ENCODE measurements at regions of chr12 and their contacts with region 1.

Region 1: GRCh38 chr12:4857472-4858291 is 52.0 kb upstream of the KCNA1 start:
- DNase-seq: peak; percentile 34
- ATAC-seq: peak; percentile 90
- H3K4me3 ChIP-seq: no peak overlapping the region
- H3K27ac ChIP-seq: no peak overlapping the region
- H3K4me1 ChIP-seq: peaks cover 34% of the 10 kb centered on the region
- H3K27me3 ChIP-seq: no peaks in the 10 kb centered on the region; a peak in 1 of 4 replicates
- CTCF ChIP-seq: peak; percentile 96; a peak in 5 of 6 replicates
- EP300 ChIP-seq: no peak
- POLR2A ChIP-seq: no peak
- RAD21 ChIP-seq: peak; percentile 93

Region 2: DNA sequence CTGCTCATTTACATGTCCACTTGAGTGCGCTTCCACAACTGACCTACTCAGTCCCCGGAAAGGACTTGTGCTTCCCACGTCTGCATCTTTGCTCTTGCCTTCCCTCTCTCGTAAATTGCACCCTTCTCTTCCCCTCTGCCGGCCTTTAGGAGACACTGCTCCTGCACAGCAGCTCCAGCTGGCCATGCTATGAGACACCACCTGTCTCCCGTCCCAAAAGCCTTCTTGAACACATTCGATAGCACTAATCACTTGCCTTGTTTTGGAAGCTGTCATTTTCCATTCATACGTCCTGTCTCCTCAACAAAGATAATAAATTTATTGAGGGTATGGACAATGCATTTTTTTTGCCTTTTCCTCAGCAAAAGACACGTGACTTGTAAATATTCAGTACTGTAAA is 36.3 kb after region 1 on chr12:
- CTCF ChIA-PET with region 1: interaction called, 10 read pairs
- POLR2A ChIA-PET with region 1: interaction called, 3 read pairs
- RAD21 ChIA-PET with region 1: interaction called, 3 read pairs
- SMC1A ChIA-PET with region 1: interaction called, 7 read pairs
- in situ Hi-C with region 1: no loop called
- intact Hi-C with region 1: loop called (anchors 5 kb)
- DNase-seq: no peak
- ATAC-seq: no peak
- H3K4me3 ChIP-seq: no peak overlapping the region
- H3K27ac ChIP-seq: no peak overlapping the region
- H3K4me1 ChIP-seq: no peaks in the 10 kb centered on the region
- H3K27me3 ChIP-seq: no peaks in the 10 kb centered on the region; a peak in 1 of 4 replicates
- CTCF ChIP-seq: no peak
- EP300 ChIP-seq: no peak
- POLR2A ChIP-seq: no peak
- RAD21 ChIP-seq: no peak

Region 3: DNA sequence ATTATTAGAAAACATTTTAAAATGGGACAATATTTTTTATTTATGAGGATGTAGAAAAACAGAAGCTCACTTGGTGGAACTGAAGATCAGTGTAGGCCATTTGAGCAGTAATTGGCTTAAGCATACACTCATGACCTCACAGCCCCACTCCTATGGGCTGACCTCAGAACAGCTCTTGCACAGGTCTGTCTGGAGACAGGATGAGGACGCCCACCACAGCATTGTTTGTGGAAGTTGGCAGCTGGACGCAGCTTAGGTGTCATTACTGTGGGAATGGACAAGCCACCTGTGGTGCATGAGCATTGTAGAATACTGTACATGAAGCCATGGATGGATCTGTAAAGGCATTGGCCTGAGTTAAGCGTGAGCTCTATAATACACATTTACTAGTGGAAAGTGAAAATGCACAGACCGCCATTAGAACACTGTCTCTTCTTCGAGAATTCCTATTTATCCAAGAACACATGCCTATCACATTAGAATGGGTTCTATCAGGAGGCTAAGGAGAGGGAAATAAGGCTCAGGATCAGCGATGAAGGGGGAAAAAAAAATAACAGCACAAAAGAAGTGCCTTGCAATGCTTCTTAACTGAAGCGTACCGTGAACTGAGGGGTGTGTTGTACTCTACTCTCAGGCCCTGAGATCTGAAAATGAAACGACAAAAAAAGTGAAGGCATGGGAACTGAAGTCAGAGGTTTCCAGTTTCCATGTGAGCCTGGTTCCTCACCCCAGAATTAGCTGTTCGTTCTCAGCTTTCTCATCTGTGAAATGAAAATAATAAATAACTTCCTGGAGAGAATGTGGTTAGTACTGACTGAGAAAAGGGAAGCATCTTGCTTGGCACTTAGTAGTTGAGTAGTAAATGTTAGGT is 85.6 kb after region 1 on chr12:
- CTCF ChIA-PET with region 1: interaction called, 9 read pairs
- POLR2A ChIA-PET with region 1: interaction called, 3 read pairs
- RAD21 ChIA-PET with region 1: interaction called, 9 read pairs
- SMC1A ChIA-PET with region 1: interaction called, 13 read pairs
- in situ Hi-C with region 1: no loop called
- intact Hi-C with region 1: no loop called
- DNase-seq: peak; percentile 94
- ATAC-seq: peak; percentile 95
- H3K4me3 ChIP-seq: peak overlapping the region; percentile 48; the same call in 1 of the 2 replicates
- H3K27ac ChIP-seq: peak overlapping the region; percentile 94
- H3K4me1 ChIP-seq: peaks cover 32% of the 10 kb centered on the region
- H3K27me3 ChIP-seq: no peaks in the 10 kb centered on the region
- CTCF ChIP-seq: no peak
- EP300 ChIP-seq: no peak
- POLR2A ChIP-seq: no peak
- RAD21 ChIP-seq: 0 out of 2 replicates have a peak, but pooled peaks have one; percentile 5

Region 4: DNA sequence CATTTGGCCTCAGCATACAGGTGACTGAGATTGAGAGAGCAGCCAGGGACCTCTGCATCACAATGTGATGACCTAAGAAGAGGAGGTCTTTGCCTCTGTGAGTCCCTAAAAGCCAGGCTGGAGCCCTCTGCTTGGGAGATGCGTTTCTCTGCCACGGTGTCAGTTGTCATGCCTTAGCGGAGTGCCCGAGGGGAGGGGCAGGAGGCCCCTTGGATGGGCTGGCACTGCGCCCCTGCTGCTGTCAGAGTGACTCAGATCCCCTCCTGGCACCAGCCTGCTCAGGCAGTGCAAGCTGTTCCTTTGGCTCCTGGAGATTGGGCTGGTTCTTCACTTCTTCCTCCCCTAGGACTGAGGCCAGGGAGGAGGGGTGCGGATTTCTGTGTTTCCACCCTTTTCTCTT is 121.1 kb after region 1 on chr12:
- CTCF ChIA-PET with region 1: interaction called, 70 read pairs
- POLR2A ChIA-PET with region 1: no interaction called
- RAD21 ChIA-PET with region 1: interaction called, 4 read pairs
- SMC1A ChIA-PET with region 1: interaction called, 3 read pairs
- in situ Hi-C with region 1: no loop called
- intact Hi-C with region 1: no loop called
- DNase-seq: no peak
- ATAC-seq: no peak
- H3K4me3 ChIP-seq: no peak overlapping the region
- H3K27ac ChIP-seq: no peak overlapping the region
- H3K4me1 ChIP-seq: peaks cover 7% of the 10 kb centered on the region; the same call in 1 of the 2 replicates
- H3K27me3 ChIP-seq: no peaks in the 10 kb centered on the region; a peak in 2 of 4 replicates
- CTCF ChIP-seq: no peak
- EP300 ChIP-seq: no peak
- POLR2A ChIP-seq: no peak
- RAD21 ChIP-seq: no peak

Region 5: GRCh38 chr12:5003020-5003666 is 145.5 kb after region 1 on chr12:
- CTCF ChIA-PET with region 1: interaction called, 84 read pairs
- POLR2A ChIA-PET with region 1: interaction called, 3 read pairs
- RAD21 ChIA-PET with region 1: interaction called, 40 read pairs
- SMC1A ChIA-PET with region 1: interaction called, 26 read pairs
- in situ Hi-C with region 1: loop called (anchors 5 kb)
- intact Hi-C with region 1: loop called (anchors 1 kb)
- DNase-seq: no peak
- ATAC-seq: peak; percentile 99
- H3K4me3 ChIP-seq: no peak overlapping the region
- H3K27ac ChIP-seq: no peak overlapping the region
- H3K4me1 ChIP-seq: peaks cover 7% of the 10 kb centered on the region; the same call in 1 of the 2 replicates
- H3K27me3 ChIP-seq: no peaks in the 10 kb centered on the region
- CTCF ChIP-seq: peak; percentile 99 to 100 (median 100); a peak in 5 of 6 replicates
- EP300 ChIP-seq: no peak
- POLR2A ChIP-seq: no peak
- RAD21 ChIP-seq: peak; percentile 100

Region 6: DNA sequence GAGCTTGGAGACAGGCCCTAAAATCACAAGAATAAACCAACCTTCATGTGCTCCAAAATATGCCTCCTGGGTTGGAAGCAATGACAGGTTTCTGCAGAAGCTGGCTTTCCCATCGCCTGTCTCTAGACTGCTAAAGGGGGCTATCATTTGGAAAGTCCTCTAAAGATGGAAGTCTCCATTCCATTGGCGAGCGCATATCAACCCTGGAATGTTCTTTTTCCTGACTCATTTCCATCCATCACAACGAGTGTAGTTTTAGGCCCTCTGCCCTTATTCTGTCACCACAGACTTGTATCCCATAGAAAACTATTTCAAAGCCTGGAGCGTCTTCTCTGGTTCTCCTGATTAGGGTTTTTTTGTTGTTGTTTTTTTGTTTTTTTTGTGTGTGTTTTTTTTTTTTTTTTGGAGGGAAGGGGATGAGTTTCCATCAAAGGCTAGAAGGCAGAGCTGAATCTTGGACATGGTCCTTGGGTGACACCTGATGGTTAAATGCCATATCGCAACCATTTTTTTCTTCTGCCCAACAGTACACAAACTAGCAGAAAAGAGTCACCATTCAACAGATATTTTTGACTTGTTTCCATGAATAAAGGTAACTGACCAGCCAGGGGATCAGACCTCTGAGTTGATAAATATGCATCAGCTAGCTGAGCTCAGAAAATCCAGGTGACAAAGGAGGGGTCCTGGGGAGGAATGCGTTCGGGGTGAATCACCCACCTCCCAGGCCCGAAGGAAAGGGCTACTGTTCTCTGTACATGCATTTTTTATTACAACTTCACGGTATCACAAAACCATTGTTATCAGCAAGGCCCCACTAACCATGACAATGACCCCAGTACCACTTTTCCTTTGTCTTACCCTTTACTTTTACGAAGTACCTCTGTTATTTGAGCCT is 226.5 kb after region 1 on chr12:
- CTCF ChIA-PET with region 1: interaction called, 39 read pairs
- POLR2A ChIA-PET with region 1: no interaction called
- RAD21 ChIA-PET with region 1: interaction called, 4 read pairs
- SMC1A ChIA-PET with region 1: interaction called, 13 read pairs
- in situ Hi-C with region 1: loop called (anchors 5 kb)
- intact Hi-C with region 1: loop called (anchors 1 kb)
- DNase-seq: peak; percentile 23
- ATAC-seq: peak; percentile 68
- H3K4me3 ChIP-seq: no peak overlapping the region
- H3K27ac ChIP-seq: no peak overlapping the region
- H3K4me1 ChIP-seq: no peaks in the 10 kb centered on the region
- H3K27me3 ChIP-seq: peaks cover 0 to 3% of the 10 kb centered on the region in 2 experiments; a peak in 2 of 4 replicates
- CTCF ChIP-seq: peak; percentile 69 to 79 (median 70)
- EP300 ChIP-seq: no peak
- POLR2A ChIP-seq: no peak
- RAD21 ChIP-seq: peak; percentile 89

Measured in GM12878 (cell line).